Brain microvascular endothelial cell (primary cell): ENCODE measurements at regions of chr1 and their contacts with region 1.

Region 1: GRCh38 chr1:84433258-84434080 is 35.2 kb downstream of the DNASE2B start:
- DNase-seq: peak; percentile 75
- H3K4me3 ChIP-seq: peak overlapping the region; percentile 24
- H3K27ac ChIP-seq: peak overlapping the region; percentile 8
- H3K27me3 ChIP-seq: no peaks in the 10 kb centered on the region
- CTCF ChIP-seq: peak; percentile 73

Region 2: GRCh38 chr1:84143796-84144565 is 289.5 kb before region 1 on chr1 and contains the start of gene PRKACB:
- in situ Hi-C with region 1: loop called (anchors 10 kb)
- DNase-seq: peak; percentile 20
- H3K4me3 ChIP-seq: no peak within 1 kb of the TSS
- H3K27ac ChIP-seq: peak within 1 kb of the TSS; percentile 68
- H3K27me3 ChIP-seq: no peaks in the 10 kb centered on the region
- CTCF ChIP-seq: no peak

Region 3: DNA sequence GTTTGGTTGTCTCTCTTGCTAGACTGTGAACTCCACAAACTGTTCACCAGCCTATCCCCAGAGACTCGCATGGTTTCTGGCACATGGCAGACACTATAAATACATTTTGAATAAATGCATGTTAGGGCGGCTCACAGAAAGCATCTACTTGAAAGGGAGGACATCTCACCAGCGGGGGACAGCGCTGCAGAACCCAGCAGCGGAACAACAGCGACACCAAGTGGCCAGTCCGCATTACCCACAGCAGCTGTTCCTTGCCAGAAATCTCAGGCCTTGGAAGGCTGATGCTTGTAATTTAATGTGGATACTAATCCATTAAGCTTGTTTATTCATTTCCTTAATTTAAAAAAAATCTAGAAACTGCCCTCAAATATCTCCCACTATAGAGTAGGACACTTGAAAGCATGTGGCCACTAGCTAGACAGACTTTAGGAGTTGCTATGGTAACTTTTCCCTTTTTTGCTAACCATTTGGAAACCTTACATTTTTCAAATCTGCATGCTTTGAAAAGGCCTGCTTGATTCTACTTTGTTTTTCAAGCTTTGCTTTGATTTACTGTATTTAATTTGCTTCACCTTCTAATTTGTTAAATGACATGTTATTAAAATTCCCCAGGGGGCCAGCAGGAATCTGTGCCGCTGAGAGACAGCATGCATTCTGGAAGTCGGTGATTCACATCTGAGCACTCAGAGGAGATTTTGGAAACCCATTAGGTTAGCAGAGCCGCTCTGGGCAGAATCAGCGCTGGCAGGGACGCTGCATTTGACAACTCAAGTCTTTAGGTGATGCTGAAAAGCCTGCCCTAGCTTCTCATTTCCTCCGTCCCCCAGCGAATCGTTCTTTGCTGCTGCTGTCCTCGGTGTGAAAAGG is 320.3 kb after region 1 on chr1:
- in situ Hi-C with region 1: loop called (anchors 25 kb)
- DNase-seq: peak; percentile 38
- H3K4me3 ChIP-seq: no peak overlapping the region
- H3K27ac ChIP-seq: no peak overlapping the region
- H3K27me3 ChIP-seq: peaks cover 3% of the 10 kb centered on the region
- CTCF ChIP-seq: peak; percentile 99